HEK293T (cell line): ENCODE measurements at regions of chr1 and their contacts with region 1.

Region 1: GRCh38 chr1:183227963-183228649 is 42.0 kb downstream of the LAMC2 start:
- DNase-seq: peak; percentile 85

Region 2: GRCh38 chr1:182962554-182963115 is 265.5 kb before region 1 on chr1:
- CTCF ChIA-PET with region 1: interaction called, 11 read pairs
- POLR2A ChIA-PET with region 1: no interaction called
- DNase-seq: peak; percentile 92

Region 3: GRCh38 chr1:183025782-183026774 is 202.0 kb before region 1 on chr1:
- CTCF ChIA-PET with region 1: interaction called, 12 read pairs
- POLR2A ChIA-PET with region 1: no interaction called
- DNase-seq: peak; percentile 55

Region 4: GRCh38 chr1:183205196-183205781 is 22.8 kb before region 1 on chr1:
- CTCF ChIA-PET with region 1: interaction called, 10 read pairs
- POLR2A ChIA-PET with region 1: interaction called, 4 read pairs
- DNase-seq: no peak